Activated CD4-positive, alpha-beta memory T cell treated with anti-CD3 and anti-CD28 coated beads for 36 hours (primary cell): ENCODE measurements at regions of chr16 and their contacts with region 1.

Region 1: DNA sequence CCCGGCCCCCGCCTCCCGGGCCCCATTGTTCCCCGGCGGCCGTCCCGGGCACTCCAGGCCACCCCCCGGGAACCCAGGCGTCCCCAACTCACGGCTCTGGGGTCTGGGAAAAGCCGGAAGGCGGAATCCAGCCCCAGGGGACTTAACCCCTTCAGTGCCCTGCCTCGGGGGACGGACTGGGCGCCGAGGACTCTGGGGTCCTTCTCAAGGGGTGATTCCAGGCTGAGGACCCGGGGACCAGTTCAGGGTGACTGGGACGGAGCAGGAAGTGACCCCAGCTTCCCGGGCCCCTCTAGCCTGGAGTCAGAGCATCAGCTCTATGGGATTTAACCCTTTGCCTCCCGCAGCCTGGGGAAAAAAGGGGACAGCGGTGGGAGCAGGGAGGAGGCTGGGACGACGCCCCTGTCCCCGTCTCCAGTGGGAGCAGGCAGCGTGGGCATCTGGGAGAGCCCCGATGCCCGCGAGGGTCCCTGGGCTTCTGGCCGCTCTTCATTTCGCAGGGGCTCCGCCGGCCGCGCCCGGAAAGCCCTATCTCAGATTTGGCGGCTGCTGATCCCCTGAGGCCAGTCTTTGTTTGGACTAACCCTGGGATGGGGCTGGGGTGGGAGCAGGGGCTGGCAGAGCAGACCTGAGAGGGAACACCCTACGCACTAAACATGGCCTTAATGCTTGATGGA is at the start of gene ZNF629:
- DNase-seq: peak; percentile 31
- H3K4me3 Mint-ChIP-seq: peak within 1 kb of the TSS; percentile 77
- H3K27ac Mint-ChIP-seq: no peak within 1 kb of the TSS
- H3K4me1 Mint-ChIP-seq: peaks cover 12% of the 10 kb centered on the region
- H3K27me3 Mint-ChIP-seq: peaks cover 4% of the 10 kb centered on the region
- total RNA-seq, gene ZNF629: 2.9 to 3.1 TPM

Region 2: GRCh38 chr16:30669896-30670797 is 116.9 kb before region 1 on chr16:
- CTCF ChIA-PET with region 1: no interaction called
- POLR2A ChIA-PET with region 1: no interaction called
- intact Hi-C with region 1: no loop called
- DNase-seq: no peak
- H3K4me3 Mint-ChIP-seq: no peak overlapping the region
- H3K27ac Mint-ChIP-seq: no peak overlapping the region
- H3K4me1 Mint-ChIP-seq: no peaks in the 10 kb centered on the region
- H3K27me3 Mint-ChIP-seq: no peaks in the 10 kb centered on the region

Region 3: GRCh38 chr16:30805370-30806169 is 18.5 kb after region 1 on chr16:
- CTCF ChIA-PET with region 1: interaction called, 3 read pairs
- POLR2A ChIA-PET with region 1: interaction called, 3 read pairs
- intact Hi-C with region 1: loop called (anchors 1 kb)
- DNase-seq: peak; percentile 66
- H3K4me3 Mint-ChIP-seq: peak overlapping the region; percentile 63
- H3K27ac Mint-ChIP-seq: peak overlapping the region; percentile 45
- H3K4me1 Mint-ChIP-seq: peaks cover 14% of the 10 kb centered on the region
- H3K27me3 Mint-ChIP-seq: peaks cover 1% of the 10 kb centered on the region